ENCODE measurements at regions of chr12 and their contacts with region 1.

Region 1: GRCh38 chr12:76920172-76921014 is 41.6 kb upstream of the CSRP2 start:
- DNase-seq: no peak
- H3K4me3 ChIP-seq: no peak overlapping the region
- H3K27ac ChIP-seq: peak overlapping the region in 1 of 2 donors; percentile 66
- H3K4me1 ChIP-seq: peaks cover under 1 to 13% of the 10 kb centered on the region in 2 donors
- H3K27me3 ChIP-seq: no peaks in the 10 kb centered on the region
- CTCF ChIP-seq: no peak

Region 2: GRCh38 chr12:76878899-76879709 is 41.3 kb before region 1 on chr12 and contains the start of gene CSRP2:
- intact Hi-C with region 1: loop called (anchors 2 kb)
- DNase-seq: peak; percentile 83 to 96
- H3K4me3 ChIP-seq: peak within 1 kb of the TSS; percentile 70 to 76
- H3K27ac ChIP-seq: peak within 1 kb of the TSS; percentile 94 to 98
- H3K4me1 ChIP-seq: peaks cover 0 to 33% of the 10 kb centered on the region in 2 donors
- H3K27me3 ChIP-seq: no peaks in the 10 kb centered on the region
- CTCF ChIP-seq: peak; percentile 18 to 36 (median 30)
- total RNA-seq, gene CSRP2: 59.7 TPM

Measured in ascending aorta (tissue), 2 donors.